PC-9 (cell line): ENCODE measurements at regions of chr15 and their contacts with region 1.

Region 1: DNA sequence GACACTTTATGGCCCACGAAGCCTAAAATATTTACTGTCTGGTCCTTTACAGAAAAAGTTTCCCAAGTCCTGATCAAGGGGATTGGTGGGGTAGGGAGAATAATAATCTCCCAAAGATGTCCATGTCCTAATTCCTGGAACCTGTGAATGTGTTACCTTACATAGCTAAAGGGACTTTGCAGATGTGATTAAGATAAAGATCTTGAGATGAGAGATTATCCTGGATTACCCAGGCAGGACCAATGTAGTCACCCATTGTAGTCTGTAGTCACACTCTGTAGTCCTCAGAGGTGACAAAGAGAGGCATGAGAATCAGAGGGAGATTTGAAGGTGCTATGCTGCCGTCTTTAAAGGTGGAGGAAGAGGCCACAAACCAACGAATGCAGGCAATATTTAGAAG is 23.5 kb upstream of the PIAS1 start:
- DNase-seq: no peak
- H3K4me3 ChIP-seq: no peak overlapping the region
- H3K27ac ChIP-seq: no peak overlapping the region
- H3K4me1 ChIP-seq: no peaks in the 10 kb centered on the region
- H3K27me3 ChIP-seq: no peaks in the 10 kb centered on the region
- CTCF ChIP-seq: no peak

Region 2: GRCh38 chr15:68017191-68017590 is 13.4 kb before region 1 on chr15:
- CTCF ChIA-PET with region 1: no interaction called
- POLR2A ChIA-PET with region 1: interaction called, 14 read pairs
- intact Hi-C with region 1: no loop called
- DNase-seq: peak; percentile 64 to 84
- H3K4me3 ChIP-seq: no peak overlapping the region
- H3K27ac ChIP-seq: peak overlapping the region; percentile 39; the same call in 1 of the 2 replicates
- H3K4me1 ChIP-seq: 0 out of 2 replicates have a peak, but pooled peaks cover 9% of the 10 kb centered on the region
- H3K27me3 ChIP-seq: no peaks in the 10 kb centered on the region
- CTCF ChIP-seq: no peak

Region 3: DNA sequence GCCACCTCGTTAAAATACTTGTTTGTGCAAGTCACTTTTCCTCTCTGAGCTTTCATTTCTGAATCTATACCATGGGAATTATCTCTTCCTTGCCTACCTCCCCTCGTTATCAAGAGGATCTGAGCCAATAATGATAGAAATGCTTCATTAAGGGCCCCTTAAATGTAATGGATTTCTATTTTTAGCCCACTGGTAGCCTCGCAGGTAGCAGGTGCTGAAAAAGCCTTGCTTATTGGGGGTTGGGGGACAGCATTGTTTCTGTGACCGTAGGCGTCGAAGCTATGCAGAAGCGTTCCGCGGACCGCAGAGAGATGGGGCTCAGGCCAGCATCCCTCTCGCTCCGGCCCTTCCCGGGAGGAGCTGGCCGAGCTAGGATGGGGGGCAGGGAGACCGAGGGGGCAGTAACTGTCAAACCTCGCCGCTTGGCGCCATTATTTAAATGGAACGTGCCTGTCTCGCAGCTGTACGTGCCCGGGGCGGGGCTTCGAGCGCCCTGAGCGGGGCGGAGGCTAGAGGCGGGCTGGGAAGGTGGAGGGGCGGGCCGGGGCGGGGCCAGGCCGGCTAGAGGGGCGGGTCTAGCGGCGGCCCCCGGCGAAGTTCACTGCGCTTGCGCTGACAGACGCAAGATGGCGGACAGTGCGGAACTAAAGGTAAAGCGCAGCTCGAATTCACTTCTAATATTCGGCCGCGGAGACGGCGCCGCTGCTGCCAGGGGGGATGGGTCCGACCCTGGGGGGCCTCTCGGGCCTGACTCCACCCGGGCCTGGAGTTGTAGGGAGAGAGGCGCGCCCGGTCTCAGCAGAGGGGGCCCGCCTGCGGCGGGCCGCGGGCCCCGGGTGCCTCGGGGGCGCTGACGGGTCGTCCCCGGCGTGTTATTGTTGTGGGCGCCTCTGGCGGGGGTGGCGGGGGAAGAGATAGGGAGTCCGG is 23.3 kb after region 1 on chr15 and contains the start of gene PIAS1:
- CTCF ChIA-PET with region 1: no interaction called
- POLR2A ChIA-PET with region 1: interaction called, 12 read pairs
- intact Hi-C with region 1: no loop called
- DNase-seq: peak; percentile 67 to 91
- H3K4me3 ChIP-seq: peak within 1 kb of the TSS; percentile 84
- H3K27ac ChIP-seq: peak within 1 kb of the TSS; percentile 32; the same call in 1 of the 2 replicates
- H3K4me1 ChIP-seq: peaks cover 23% of the 10 kb centered on the region; the same call in 1 of the 2 replicates
- H3K27me3 ChIP-seq: no peaks in the 10 kb centered on the region
- CTCF ChIP-seq: no peak
- total RNA-seq, gene PIAS1: 42.2 and 42.5 TPM in 2 replicates

Region 4: DNA sequence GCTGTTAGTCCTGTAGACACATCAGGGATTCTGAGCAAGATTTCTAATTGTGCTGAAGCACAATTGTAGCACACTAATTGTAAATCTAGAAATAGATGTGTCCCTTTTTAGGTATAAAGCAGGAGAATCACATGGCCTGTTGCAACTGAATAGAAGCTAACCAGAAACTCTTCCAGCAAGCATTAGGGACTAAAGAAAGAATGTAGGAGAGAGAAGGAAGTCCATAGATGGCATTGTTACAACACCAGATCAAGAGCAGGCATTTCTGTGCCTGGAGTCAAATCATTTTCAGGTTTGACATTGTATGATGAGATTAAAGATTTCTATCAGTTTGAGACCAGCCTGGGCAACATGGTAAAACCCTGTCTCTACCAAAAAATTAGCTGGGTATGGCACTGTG is 147.1 kb after region 1 on chr15:
- CTCF ChIA-PET with region 1: no interaction called
- POLR2A ChIA-PET with region 1: no interaction called
- intact Hi-C with region 1: no loop called
- DNase-seq: no peak
- H3K4me3 ChIP-seq: no peak overlapping the region
- H3K27ac ChIP-seq: no peak overlapping the region
- H3K4me1 ChIP-seq: no peaks in the 10 kb centered on the region
- H3K27me3 ChIP-seq: no peaks in the 10 kb centered on the region
- CTCF ChIP-seq: no peak

Region 5: GRCh38 chr15:68543165-68544008 is 512.8 kb after region 1 on chr15:
- CTCF ChIA-PET with region 1: interaction called, 23 read pairs
- POLR2A ChIA-PET with region 1: no interaction called
- intact Hi-C with region 1: no loop called
- DNase-seq: no peak
- H3K4me3 ChIP-seq: no peak overlapping the region
- H3K27ac ChIP-seq: no peak overlapping the region
- H3K4me1 ChIP-seq: no peaks in the 10 kb centered on the region
- H3K27me3 ChIP-seq: no peaks in the 10 kb centered on the region
- CTCF ChIP-seq: no peak

Region 6: GRCh38 chr15:69031013-69032001 is 1000.7 kb after region 1 on chr15:
- CTCF ChIA-PET with region 1: interaction called, 13 read pairs
- POLR2A ChIA-PET with region 1: no interaction called
- intact Hi-C with region 1: no loop called
- DNase-seq: peak in 1 of 2 experiments; percentile 68
- H3K4me3 ChIP-seq: peak overlapping the region; percentile 2; the same call in 1 of the 2 replicates
- H3K27ac ChIP-seq: peak overlapping the region; percentile 36; the same call in 1 of the 2 replicates
- H3K4me1 ChIP-seq: peaks cover 26% of the 10 kb centered on the region
- H3K27me3 ChIP-seq: no peaks in the 10 kb centered on the region
- CTCF ChIP-seq: peak; percentile 44; the same call in 1 of the 2 replicates